Mammary epithelial cell (primary cell): ENCODE measurements at regions of chr4 and their contacts with region 1.

Region 1: GRCh38 chr4:77156533-77156911 is 485 bp upstream of the CCNG2 start:
- DNase-seq: peak; percentile 100
- H3K4me3 ChIP-seq: peak overlapping the region; percentile 91 to 99 (median 99)
- H3K27ac ChIP-seq: peak overlapping the region; percentile 96
- H3K4me1 ChIP-seq: peaks cover 21% of the 10 kb centered on the region
- H3K27me3 ChIP-seq: no peaks in the 10 kb centered on the region
- CTCF ChIP-seq: no peak

Region 2: DNA sequence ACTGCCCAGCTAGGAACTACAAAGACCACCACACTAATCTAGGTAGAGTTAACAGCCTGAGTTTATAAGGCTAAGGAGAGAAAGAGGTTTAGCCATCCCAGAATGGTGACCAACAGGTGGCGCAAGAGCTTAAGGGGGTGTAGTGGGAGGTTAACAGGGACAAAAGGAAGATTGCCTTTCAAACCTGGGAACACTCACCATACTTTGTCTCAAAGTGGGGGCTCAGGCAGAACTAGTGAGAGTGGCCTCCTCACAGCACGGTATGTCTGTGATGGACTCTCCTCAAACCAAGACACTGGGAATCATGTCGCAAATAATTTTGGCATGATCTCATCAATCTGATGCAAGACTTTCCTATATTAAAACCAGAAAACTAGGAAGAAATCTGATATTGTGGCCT is 104.2 kb before region 1 on chr4:
- CTCF ChIA-PET with region 1: no interaction called
- dilution Hi-C with region 1: loop called (anchors 5 kb)
- in situ Hi-C with region 1: no loop called
- intact Hi-C with region 1: loop called (anchors 1 kb)
- DNase-seq: peak; percentile 46
- H3K4me3 ChIP-seq: no peak overlapping the region
- H3K27ac ChIP-seq: peak overlapping the region; percentile 51
- H3K4me1 ChIP-seq: peaks cover 31% of the 10 kb centered on the region
- H3K27me3 ChIP-seq: no peaks in the 10 kb centered on the region
- CTCF ChIP-seq: peak; percentile 71 to 80

Region 3: DNA sequence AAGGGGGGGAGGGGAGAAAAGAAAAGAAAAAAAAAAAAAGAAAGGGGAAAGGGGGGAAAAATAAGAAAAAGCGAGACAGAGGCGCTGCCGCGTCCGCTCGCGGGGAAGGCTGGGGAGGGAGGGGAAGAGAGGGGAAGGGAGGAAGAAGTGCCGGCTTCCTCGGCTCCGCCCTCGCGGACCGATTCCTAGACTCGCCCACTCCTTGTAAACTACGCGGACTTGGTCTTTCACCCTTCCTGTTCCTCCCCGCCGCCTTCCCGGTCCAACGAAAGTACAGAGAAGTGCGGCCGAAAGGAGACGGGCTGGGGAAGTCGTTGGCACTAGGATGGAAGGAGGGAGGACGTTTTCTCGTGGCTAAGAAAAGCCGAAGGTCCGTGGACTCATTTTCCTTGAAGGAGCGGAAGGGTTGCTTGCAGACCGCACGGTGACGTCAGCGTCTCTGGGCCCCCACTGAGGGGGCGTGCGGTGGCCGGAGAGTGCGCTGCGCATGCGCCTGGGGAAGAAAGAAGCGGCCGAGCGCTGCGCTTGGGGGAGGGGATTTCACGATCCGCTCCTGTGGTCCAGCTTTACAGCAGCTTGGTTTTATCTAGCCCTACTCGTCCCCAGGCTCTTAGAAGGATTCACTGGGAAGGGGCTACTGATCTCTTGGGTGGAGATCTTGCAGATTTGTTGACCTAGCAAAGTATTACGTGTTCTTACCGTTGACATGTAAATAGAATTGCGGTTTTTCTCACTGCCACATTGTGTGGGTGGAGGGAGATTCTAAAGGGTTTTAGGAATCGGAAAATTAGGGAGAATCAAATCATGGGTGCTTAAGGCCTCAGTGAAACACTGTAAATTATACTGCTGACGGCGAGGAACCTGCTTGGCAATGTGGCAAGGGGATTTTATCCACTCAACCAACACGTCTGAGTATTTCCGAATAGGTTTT is 80.4 kb before region 1 on chr4 and contains the start of gene CCNI:
- CTCF ChIA-PET with region 1: no interaction called
- dilution Hi-C with region 1: no loop called
- in situ Hi-C with region 1: no loop called
- intact Hi-C with region 1: loop called (anchors 1 kb)
- DNase-seq: peak; percentile 96
- H3K4me3 ChIP-seq: peak within 1 kb of the TSS; percentile 73 to 92 (median 83)
- H3K27ac ChIP-seq: peak within 1 kb of the TSS; percentile 96
- H3K4me1 ChIP-seq: peaks cover 14% of the 10 kb centered on the region
- H3K27me3 ChIP-seq: no peaks in the 10 kb centered on the region
- CTCF ChIP-seq: no peak
- total RNA-seq, gene CCNI: 177 to 250 TPM

Region 4: DNA sequence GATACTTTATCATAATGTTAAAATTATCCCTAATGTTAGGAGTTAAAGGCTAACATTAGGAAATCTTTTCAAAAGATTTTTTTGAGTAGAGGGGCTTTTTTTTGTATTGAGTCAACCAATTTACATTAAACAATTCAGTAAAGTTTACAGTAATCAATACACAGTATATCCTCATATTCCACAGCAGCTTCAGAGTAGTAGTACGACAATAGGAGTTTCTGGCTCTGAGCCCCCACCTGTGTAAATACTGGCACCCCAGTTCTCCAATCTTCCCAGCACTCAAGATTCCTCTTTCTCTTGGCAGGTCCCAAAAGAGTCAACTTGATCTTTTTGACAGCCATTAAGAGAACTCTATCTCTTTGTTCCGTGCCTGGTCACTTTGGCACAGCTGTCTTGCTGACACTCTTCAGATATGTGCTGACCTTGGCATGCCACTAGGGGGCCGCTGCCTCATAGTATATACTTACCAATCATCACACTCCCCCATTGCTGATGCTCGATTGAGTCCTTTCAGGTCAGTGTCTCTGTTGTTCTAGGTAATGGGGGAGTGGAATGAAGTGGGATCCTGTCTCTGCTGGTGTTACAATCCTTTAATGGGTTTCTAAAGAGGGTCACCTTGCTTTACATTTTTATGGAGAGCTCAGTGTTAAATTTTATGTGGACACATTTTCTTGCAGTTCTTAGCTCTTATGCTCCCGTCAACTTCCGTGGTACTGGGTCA is 61.3 kb before region 1 on chr4:
- CTCF ChIA-PET with region 1: no interaction called
- dilution Hi-C with region 1: loop called (anchors 5 kb)
- in situ Hi-C with region 1: no loop called
- intact Hi-C with region 1: loop called (anchors 1 kb)
- DNase-seq: peak; percentile 53
- H3K4me3 ChIP-seq: no peak overlapping the region
- H3K27ac ChIP-seq: peak overlapping the region; percentile 26
- H3K4me1 ChIP-seq: peaks cover 43% of the 10 kb centered on the region
- H3K27me3 ChIP-seq: no peaks in the 10 kb centered on the region
- CTCF ChIP-seq: peak; percentile 94

Region 5: GRCh38 chr4:77104791-77105540 is 51.6 kb before region 1 on chr4:
- CTCF ChIA-PET with region 1: no interaction called
- dilution Hi-C with region 1: loop called (anchors 5 kb)
- in situ Hi-C with region 1: no loop called
- intact Hi-C with region 1: no loop called
- DNase-seq: peak; percentile 73
- H3K4me3 ChIP-seq: no peak overlapping the region
- H3K27ac ChIP-seq: no peak overlapping the region
- H3K4me1 ChIP-seq: peaks cover 13% of the 10 kb centered on the region
- H3K27me3 ChIP-seq: no peaks in the 10 kb centered on the region
- CTCF ChIP-seq: no peak

Region 6: GRCh38 chr4:77220828-77221613 is 64.5 kb after region 1 on chr4:
- CTCF ChIA-PET with region 1: no interaction called
- dilution Hi-C with region 1: no loop called
- in situ Hi-C with region 1: no loop called
- intact Hi-C with region 1: no loop called
- DNase-seq: no peak
- H3K4me3 ChIP-seq: no peak overlapping the region
- H3K27ac ChIP-seq: no peak overlapping the region
- H3K4me1 ChIP-seq: no peaks in the 10 kb centered on the region
- H3K27me3 ChIP-seq: no peaks in the 10 kb centered on the region
- CTCF ChIP-seq: no peak